ENCODE measurements at regions of chr15 and their contacts with region 1.

Region 1: DNA sequence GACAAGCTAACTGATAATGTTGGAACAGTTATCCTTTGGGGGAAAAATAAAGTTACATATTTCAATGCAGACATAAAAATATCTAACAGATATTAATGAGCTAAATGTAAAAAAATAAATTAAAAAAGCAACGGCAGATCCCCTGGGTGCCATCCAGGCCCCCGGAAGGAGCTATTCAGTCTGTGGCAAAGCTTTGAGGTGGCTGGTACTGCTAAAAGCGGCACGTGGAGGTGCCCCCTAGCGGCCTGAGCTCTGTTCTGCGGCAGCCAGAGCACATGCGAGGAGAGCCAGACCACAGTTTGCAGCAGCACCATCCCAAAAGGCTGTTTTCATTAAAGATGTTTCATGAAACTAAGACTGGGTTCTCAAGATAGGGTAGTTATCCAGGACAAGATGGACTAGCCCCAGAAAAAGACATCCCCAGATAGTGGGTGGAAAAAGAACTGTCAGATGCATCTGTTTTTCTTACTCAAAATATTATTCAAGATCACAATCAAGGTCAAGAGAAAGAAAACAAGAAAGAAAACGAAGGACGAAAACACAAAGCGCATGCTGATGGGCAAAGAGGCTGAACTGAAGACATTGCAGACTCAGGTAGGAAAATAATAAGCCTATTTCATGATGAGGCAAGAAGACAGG is 18.7 kb downstream of the AP3S2 start:
- DNase-seq: peak; percentile 89
- H3K4me3 ChIP-seq: no peak overlapping the region
- H3K27ac ChIP-seq: no peak overlapping the region
- H3K4me1 ChIP-seq: peaks cover 0 to 12% (median 7%) of the 10 kb centered on the region in 4 donors
- H3K27me3 ChIP-seq: no peaks in the 10 kb centered on the region
- CTCF ChIP-seq: peak; percentile 91 to 98 (median 92)
- EP300 ChIP-seq: no peak
- POLR2A ChIP-seq: no peak

Region 2: DNA sequence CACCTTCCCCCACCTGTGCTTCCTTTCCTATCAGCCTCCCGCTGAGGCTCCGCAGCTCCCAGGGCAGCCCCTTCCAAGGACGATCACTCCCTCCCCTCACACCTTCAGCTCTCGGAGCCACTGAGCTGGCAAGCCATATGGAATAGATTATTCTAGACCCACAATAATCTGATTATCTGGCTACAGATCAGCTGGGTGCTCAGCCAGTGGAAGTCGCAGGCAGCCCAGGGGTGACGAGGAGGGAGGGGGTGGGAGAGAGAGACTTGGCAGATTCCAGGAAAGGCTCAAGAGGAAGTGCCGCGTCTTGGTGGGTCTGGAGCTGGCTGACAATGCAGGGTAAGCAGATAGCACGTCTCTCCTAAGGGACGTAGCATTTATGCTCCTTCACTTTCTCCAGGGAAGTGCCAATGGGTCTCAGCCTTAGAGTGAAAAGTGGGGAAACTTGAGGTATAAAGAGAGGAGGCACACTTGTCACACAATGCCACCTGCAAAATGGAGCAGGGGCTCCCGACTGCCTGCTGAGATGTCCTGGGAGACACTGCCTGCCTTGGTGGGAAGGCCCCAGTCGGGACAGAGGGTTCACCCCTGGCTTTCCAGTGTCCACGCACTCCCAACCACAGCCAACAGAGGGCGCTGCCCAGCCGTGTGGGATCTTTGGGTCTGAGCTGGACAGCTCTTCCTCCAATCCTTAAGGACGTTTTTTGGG is 114.6 kb before region 1 on chr15:
- in situ Hi-C with region 1: loop called (anchors 5 to 10 kb)
- intact Hi-C with region 1: loop called (anchors 2 kb)
- DNase-seq: peak; percentile 90
- H3K4me3 ChIP-seq: no peak overlapping the region
- H3K27ac ChIP-seq: peak overlapping the region; percentile 53 to 78 (median 68)
- H3K4me1 ChIP-seq: peaks cover 0 to 27% (median 20%) of the 10 kb centered on the region in 4 donors
- H3K27me3 ChIP-seq: no peaks in the 10 kb centered on the region
- CTCF ChIP-seq: peak; percentile 94 to 97 (median 95)
- EP300 ChIP-seq: no peak
- POLR2A ChIP-seq: no peak

Region 3: GRCh38 chr15:90000186-90001001 is 125.3 kb after region 1 on chr15:
- in situ Hi-C with region 1: no loop called
- intact Hi-C with region 1: no loop called
- DNase-seq: peak; percentile 65
- H3K4me3 ChIP-seq: peak overlapping the region; percentile 8 to 87 (median 66)
- H3K27ac ChIP-seq: peak overlapping the region; percentile 85 to 96 (median 93)
- H3K4me1 ChIP-seq: peaks cover 21 to 59% (median 52%) of the 10 kb centered on the region in 4 donors
- H3K27me3 ChIP-seq: no peaks in the 10 kb centered on the region
- CTCF ChIP-seq: no peak
- EP300 ChIP-seq: no peak
- POLR2A ChIP-seq: peak; percentile 42

Measured in transverse colon (tissue), 4 donors.